Transverse colon (tissue), 4 donors: ENCODE measurements at regions of chr11 and their contacts with region 1.

Region 1: DNA sequence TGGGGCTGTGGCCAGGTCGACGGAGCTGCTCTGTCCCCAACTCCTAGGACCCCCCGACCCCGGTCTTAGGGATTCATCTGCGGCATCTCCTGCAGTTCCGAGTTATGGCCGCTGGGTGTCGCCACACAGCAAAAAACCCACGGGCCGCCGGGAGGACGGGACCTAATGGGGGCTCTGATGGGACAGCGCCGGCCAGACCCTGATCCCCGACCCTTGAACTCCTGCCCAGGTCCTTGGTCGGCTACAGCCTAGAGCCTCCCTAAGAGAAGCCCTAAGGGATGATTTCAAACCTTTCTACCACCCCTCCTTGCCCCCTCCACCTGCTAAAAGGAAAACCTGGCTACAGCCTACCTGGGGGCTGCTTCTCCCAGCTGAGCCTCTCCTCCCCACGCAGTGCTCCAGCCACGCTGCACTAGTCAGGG is 30.8 kb upstream of the LRRC10B start:
- DNase-seq: peak; percentile 52
- H3K4me3 ChIP-seq: no peak overlapping the region
- H3K27ac ChIP-seq: no peak overlapping the region
- H3K4me1 ChIP-seq: peaks cover 5 to 33% (median 14%) of the 10 kb centered on the region in 4 donors
- H3K27me3 ChIP-seq: no peaks in the 10 kb centered on the region
- CTCF ChIP-seq: peak; percentile 93 to 97 (median 95)
- EP300 ChIP-seq: no peak
- POLR2A ChIP-seq: no peak

Region 2: DNA sequence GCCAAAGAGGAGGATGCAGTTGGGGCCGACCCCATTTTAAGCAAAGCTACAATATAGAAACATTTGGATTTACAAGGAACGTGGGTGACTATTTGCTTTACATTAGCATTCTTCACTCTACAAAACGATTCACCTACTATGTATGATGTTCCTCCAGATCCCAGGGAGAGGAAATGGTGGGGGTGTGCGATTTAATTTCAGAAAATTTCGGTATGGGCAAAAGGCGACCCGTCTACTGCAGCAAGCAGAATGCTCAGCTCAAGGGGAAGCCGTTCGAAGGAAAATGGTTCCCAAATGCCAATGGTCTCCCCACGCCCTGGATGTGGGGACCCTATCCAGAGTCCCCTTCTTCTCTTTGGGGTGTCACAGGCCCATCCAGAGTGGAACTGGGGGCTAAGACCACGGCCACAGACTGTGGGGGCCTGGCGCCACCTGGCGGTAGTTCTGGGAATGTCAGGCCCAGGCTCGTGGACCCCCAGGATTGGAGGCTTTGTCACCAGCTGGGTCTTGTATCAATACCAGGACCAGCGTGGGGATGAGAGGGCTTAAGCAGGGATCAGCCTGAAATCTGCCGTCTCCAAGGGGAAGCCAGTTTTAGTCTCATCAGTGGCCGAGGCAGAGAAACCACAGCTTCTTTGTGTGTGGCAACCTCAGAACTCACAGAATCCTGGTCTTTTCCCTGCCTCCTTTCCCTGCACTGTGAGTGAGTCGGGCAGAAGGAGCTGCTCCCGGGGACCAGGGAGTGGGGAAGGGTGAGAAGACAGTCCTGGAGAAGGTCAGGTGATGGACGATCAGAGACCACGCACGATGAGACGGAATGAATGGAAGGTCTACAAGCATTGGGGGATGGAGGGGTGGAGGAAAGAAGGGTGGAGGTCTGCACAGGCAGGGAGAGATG is 39.2 kb after region 1 on chr11:
- in situ Hi-C with region 1: loop called in 1 of 4 experiments (anchors 10 kb)
- intact Hi-C with region 1: loop called (anchors 1 kb)
- DNase-seq: no peak
- H3K4me3 ChIP-seq: no peak overlapping the region
- H3K27ac ChIP-seq: peak overlapping the region in 1 of 4 donors; percentile 19
- H3K4me1 ChIP-seq: peaks cover 4 to 11% (median 6%) of the 10 kb centered on the region in 4 donors
- H3K27me3 ChIP-seq: no peaks in the 10 kb centered on the region
- CTCF ChIP-seq: peak; percentile 96 to 99 (median 98)
- EP300 ChIP-seq: no peak
- POLR2A ChIP-seq: no peak

Region 3: GRCh38 chr11:61532139-61533038 is 54.7 kb after region 1 on chr11:
- in situ Hi-C with region 1: loop called in 1 of 4 experiments (anchors 10 kb)
- intact Hi-C with region 1: no loop called
- DNase-seq: peak; percentile 61
- H3K4me3 ChIP-seq: no peak overlapping the region
- H3K27ac ChIP-seq: peak overlapping the region in 3 of 4 donors; percentile 54 to 76 (median 73)
- H3K4me1 ChIP-seq: peaks cover 0 to 30% (median 22%) of the 10 kb centered on the region in 4 donors
- H3K27me3 ChIP-seq: no peaks in the 10 kb centered on the region
- CTCF ChIP-seq: peak; percentile 70 to 78 (median 75)
- EP300 ChIP-seq: no peak
- POLR2A ChIP-seq: no peak

Region 4: DNA sequence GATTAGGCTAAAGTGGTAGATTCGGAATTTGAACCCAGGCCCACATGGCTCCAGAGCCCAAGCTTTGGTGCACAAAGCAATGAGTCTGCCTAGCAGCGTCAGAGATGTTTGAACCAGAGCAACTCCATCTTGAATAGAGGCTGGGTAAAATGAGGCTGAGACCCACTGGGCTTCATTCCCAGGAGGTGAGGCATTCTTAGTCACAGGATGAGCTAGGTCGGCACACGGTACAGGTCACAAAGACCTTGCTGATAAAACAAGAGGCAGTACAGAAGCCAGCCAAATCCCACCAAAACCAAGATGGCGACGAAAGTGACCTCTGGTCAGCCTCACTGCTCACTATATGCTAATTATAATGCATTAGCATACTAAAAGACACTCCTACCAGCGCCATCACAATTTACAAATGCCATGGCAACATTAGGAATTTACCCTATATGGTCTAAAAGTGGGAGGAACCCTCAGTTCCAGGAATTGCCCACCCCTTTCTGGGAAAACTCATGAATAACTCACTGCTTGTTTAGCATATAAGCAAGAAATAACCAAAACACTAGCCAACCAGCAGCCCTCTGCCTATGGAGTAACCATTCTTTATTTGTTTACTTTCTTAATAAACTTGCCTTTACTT is 162.2 kb after region 1 on chr11:
- in situ Hi-C with region 1: loop called in 3 of 4 experiments (anchors 10 kb)
- intact Hi-C with region 1: no loop called
- DNase-seq: no peak
- H3K4me3 ChIP-seq: no peak overlapping the region
- H3K27ac ChIP-seq: no peak overlapping the region
- H3K4me1 ChIP-seq: peaks cover 0 to 17% (median 10%) of the 10 kb centered on the region in 4 donors
- H3K27me3 ChIP-seq: no peaks in the 10 kb centered on the region
- CTCF ChIP-seq: no peak
- EP300 ChIP-seq: no peak
- POLR2A ChIP-seq: no peak